K562 (cell line): ENCODE measurements at regions of chr11 and their contacts with region 1.

Region 1: GRCh38 chr11:14519917-14520746 is at the start of gene PSMA1:
- DNase-seq: peak; percentile 82 to 98 (median 87)
- ATAC-seq: peak; percentile 94
- H3K4me3 ChIP-seq: peak within 1 kb of the TSS; percentile 92
- H3K27ac ChIP-seq: peak within 1 kb of the TSS; percentile 99
- H3K4me1 ChIP-seq: peaks cover 6 to 8% of the 10 kb centered on the region in 2 experiments; a peak in 3 of 5 replicates
- H3K27me3 ChIP-seq: no peaks in the 10 kb centered on the region
- CTCF ChIP-seq: peak in 1 of 3 experiments; percentile 28; a peak in 1 of 6 replicates
- EP300 ChIP-seq: peak; percentile 44
- POLR2A ChIP-seq: peak; percentile 93
- RAD21 ChIP-seq: no peak
- polyA plus RNA-seq, gene PSMA1: 820 to 1,007 TPM

Region 2: GRCh38 chr11:14358729-14359439 is 161.2 kb before region 1 on chr11 and contains the start of gene RRAS2:
- CTCF ChIA-PET with region 1: no interaction called
- POLR2A ChIA-PET with region 1: no interaction called
- in situ Hi-C with region 1: no loop called
- intact Hi-C with region 1: no loop called
- DNase-seq: peak; percentile 84 to 88 (median 85)
- ATAC-seq: peak; percentile 93
- H3K4me3 ChIP-seq: peak within 1 kb of the TSS; percentile 94
- H3K27ac ChIP-seq: peak within 1 kb of the TSS; percentile 80
- H3K4me1 ChIP-seq: peaks cover 6 to 12% of the 10 kb centered on the region in 2 experiments; a peak in 3 of 5 replicates
- H3K27me3 ChIP-seq: peaks cover 0 to 7% of the 10 kb centered on the region in 2 experiments; a peak in 1 of 5 replicates
- CTCF ChIP-seq: peak in 1 of 3 experiments; percentile 7; a peak in 1 of 6 replicates
- EP300 ChIP-seq: no peak
- POLR2A ChIP-seq: peak; percentile 74
- RAD21 ChIP-seq: no peak
- polyA plus RNA-seq, gene RRAS2: 9.4 to 10.3 TPM

Region 3: DNA sequence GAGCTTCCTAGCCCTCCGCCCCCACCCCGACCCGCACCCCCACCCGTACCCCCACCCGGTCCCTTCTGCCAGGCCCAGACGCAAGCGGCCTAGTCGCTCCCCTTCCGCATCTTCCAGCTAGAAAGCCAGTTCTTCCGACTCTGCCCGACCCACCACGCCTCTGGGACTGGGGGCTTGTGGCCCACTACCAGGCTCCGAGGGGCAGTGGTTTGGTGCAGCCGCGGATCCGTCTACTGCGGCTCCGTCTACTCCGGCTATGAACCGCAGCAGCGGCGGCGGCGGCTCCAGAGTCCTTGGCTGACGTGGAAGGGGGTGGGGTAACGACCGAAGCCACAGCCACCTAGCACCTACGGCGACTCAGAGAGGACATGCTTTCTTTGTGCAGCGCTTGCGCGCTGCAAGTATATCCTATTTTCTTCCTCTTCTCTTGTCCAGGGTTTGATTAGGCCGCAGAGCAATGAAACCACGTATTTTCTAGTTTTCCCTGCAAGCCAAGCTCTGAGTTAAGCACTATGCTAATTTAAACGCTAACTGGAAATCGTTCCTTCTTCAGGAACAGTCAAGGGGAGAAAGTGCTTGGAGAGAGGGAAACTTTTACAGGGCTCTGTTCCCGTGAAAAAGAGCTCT is 20.5 kb before region 1 on chr11 and contains the start of gene COPB1:
- CTCF ChIA-PET with region 1: no interaction called
- POLR2A ChIA-PET with region 1: interaction called, 10 read pairs
- in situ Hi-C with region 1: no loop called
- intact Hi-C with region 1: no loop called
- DNase-seq: peak; percentile 82 to 96 (median 85)
- ATAC-seq: peak; percentile 90
- H3K4me3 ChIP-seq: peak within 1 kb of the TSS; percentile 73
- H3K27ac ChIP-seq: peak within 1 kb of the TSS; percentile 76
- H3K4me1 ChIP-seq: peaks cover 0 to 9% of the 10 kb centered on the region in 2 experiments; a peak in 3 of 5 replicates
- H3K27me3 ChIP-seq: no peaks in the 10 kb centered on the region
- CTCF ChIP-seq: no peak
- EP300 ChIP-seq: no peak
- POLR2A ChIP-seq: peak; percentile 92
- RAD21 ChIP-seq: no peak
- polyA plus RNA-seq, gene COPB1: 89.6 to 111 TPM

Region 4: GRCh38 chr11:14643697-14644225 is 123.6 kb after region 1 on chr11 and contains the start of gene PDE3B:
- CTCF ChIA-PET with region 1: no interaction called
- POLR2A ChIA-PET with region 1: interaction called, 7 read pairs
- in situ Hi-C with region 1: no loop called
- intact Hi-C with region 1: loop called (anchors 5 kb)
- DNase-seq: peak in 3 of 4 experiments; percentile 89 to 93 (median 93)
- ATAC-seq: peak; percentile 82
- H3K4me3 ChIP-seq: peak within 1 kb of the TSS; percentile 77
- H3K27ac ChIP-seq: peak within 1 kb of the TSS; percentile 92
- H3K4me1 ChIP-seq: peaks cover 16 to 21% of the 10 kb centered on the region in 2 experiments
- H3K27me3 ChIP-seq: no peaks in the 10 kb centered on the region
- CTCF ChIP-seq: peak in 2 of 3 experiments; percentile 31 to 42; a peak in 3 of 6 replicates
- EP300 ChIP-seq: peak; percentile 60; the same call in 1 of the 2 replicates
- POLR2A ChIP-seq: peak; percentile 87
- RAD21 ChIP-seq: peak in 1 of 2 experiments; percentile 30; a peak in 3 of 4 replicates
- polyA plus RNA-seq, gene PDE3B: 2.3 to 2.9 TPM

Region 5: DNA sequence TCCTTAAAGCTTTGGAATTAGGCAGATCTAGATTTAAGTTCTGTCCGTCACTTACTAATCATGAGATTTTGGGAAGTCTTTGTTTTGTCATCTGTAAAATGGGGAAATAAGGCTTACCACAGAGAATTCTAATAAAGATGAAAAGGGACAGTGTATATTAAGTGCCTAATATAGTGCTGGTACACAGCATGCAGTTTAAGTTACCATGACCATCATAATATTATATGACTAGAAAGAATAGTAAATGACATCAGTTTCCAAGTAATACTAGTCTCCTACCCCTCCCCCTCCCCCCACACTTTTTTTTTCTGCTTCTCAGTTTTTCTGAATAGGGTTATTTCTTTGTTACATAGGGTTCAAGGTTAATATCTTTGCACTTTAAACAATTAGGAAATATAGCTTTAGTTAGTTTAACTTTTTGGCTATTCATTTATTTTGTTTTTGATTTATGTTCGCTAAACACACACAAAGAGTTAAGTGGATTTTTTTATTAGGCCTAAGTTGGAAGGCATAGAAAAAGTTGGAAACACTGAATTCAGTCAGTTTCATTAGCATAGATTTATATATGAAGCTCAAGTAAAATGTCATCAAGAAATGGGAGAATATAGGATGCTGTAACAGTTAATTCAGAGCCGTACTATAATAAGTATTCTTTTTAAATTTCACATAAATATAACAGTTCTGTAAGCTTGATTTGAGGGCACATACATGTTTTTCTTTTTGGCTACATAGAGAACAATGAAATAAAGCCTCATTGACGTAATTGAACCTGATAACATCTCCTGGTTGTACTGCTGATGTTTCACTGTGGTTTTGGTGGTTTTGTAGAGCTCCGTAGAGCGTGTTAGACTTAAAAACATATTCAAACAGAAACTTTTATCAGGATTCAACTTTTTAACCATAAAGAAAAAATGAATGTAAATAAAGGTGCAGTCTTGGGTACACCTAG is 244.7 kb after region 1 on chr11:
- CTCF ChIA-PET with region 1: no interaction called
- POLR2A ChIA-PET with region 1: no interaction called
- in situ Hi-C with region 1: no loop called
- intact Hi-C with region 1: loop called (anchors 5 kb)
- DNase-seq: peak; percentile 9 to 70 (median 34)
- ATAC-seq: peak; percentile 85
- H3K4me3 ChIP-seq: no peak overlapping the region
- H3K27ac ChIP-seq: peak overlapping the region; percentile 45; the same call in 1 of the 3 replicates
- H3K4me1 ChIP-seq: peaks cover 0 to 8% of the 10 kb centered on the region in 2 experiments; a peak in 2 of 5 replicates
- H3K27me3 ChIP-seq: no peaks in the 10 kb centered on the region
- CTCF ChIP-seq: no peak
- EP300 ChIP-seq: peak; percentile 62
- POLR2A ChIP-seq: no peak
- RAD21 ChIP-seq: no peak; a peak in 1 of 4 replicates

Region 6: DNA sequence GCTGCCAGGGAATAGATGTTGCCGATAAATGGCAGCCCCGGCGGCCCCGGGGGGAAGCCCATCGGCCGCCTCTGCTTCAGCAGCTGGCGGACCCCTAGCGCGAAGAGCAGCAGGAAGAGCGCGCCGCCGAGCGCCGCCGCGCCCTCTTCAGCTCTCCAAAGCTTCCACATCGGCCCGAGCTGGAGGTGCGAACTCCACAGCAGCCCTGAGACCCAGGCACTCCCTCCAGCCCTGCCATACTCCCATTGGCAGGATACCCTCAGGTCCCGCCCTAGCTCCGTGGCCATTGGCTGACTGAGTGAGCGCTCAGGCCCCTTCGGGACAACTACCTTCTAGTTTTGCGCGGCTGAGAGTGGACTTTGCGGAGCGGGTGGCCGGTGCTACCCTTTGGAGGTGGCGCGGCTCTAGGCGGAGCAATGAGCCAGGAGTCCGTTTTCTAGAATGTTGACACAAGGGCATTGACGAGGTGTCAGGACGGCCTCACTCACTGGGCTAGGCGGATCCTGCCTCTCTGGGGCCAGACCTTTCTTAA is 372.0 kb after region 1 on chr11 and contains the start of gene CYP2R1:
- CTCF ChIA-PET with region 1: no interaction called
- POLR2A ChIA-PET with region 1: interaction called, 4 read pairs
- in situ Hi-C with region 1: loop called (anchors 10 kb)
- intact Hi-C with region 1: loop called (anchors 5 kb)
- DNase-seq: peak; percentile 97 to 100 (median 99)
- ATAC-seq: peak; percentile 97
- H3K4me3 ChIP-seq: peak within 1 kb of the TSS; percentile 54
- H3K27ac ChIP-seq: peak within 1 kb of the TSS; percentile 79
- H3K4me1 ChIP-seq: peaks cover 23% of the 10 kb centered on the region in 2 experiments
- H3K27me3 ChIP-seq: no peaks in the 10 kb centered on the region
- CTCF ChIP-seq: peak in 2 of 3 experiments; percentile 15 to 17; a peak in 2 of 6 replicates
- EP300 ChIP-seq: no peak
- POLR2A ChIP-seq: no peak
- RAD21 ChIP-seq: no peak
- polyA plus RNA-seq, gene CYP2R1: 26.6 to 29.4 TPM